Transverse colon (tissue), 4 donors: ENCODE measurements at regions of chr11 and their contacts with region 1.

Region 1: DNA sequence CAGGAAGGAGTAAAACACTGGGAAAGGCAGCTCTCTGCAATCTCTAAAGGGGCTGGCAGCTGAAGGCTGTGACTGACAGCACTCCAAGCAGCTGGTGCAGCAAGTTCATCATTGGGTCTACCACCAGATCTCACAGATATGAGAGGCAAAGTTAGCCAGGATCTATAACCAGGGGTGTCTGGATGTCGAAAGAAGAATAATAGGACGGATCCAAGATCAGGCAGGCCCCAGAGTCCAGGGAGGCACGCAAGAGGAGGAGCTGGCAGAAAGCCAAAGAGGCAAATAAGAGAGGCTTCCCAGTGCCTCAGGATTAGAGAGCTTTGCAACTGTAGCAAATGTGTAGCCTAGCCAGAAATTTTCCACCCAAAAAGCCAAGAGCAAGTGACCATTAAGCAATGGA is 77.1 kb downstream of the RBMXL2 start:
- DNase-seq: no peak
- H3K4me3 ChIP-seq: no peak overlapping the region
- H3K27ac ChIP-seq: no peak overlapping the region
- H3K4me1 ChIP-seq: no peaks in the 10 kb centered on the region
- H3K27me3 ChIP-seq: no peaks in the 10 kb centered on the region
- CTCF ChIP-seq: no peak
- EP300 ChIP-seq: no peak
- POLR2A ChIP-seq: no peak

Region 2: DNA sequence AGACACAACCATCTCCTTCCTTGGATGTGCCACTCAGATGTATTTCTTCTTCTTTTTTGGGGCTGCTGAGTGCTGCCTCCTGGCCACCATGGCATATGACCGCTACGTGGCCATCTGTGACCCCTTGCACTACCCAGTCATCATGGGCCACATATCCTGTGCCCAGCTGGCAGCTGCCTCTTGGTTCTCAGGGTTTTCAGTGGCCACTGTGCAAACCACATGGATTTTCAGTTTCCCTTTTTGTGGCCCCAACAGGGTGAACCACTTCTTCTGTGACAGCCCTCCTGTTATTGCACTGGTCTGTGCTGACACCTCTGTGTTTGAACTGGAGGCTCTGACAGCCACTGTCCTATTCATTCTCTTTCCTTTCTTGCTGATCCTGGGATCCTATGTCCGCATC is 289.0 kb before region 1 on chr11:
- in situ Hi-C with region 1: no loop called
- intact Hi-C with region 1: no loop called
- DNase-seq: peak; percentile 12
- H3K4me3 ChIP-seq: no peak overlapping the region
- H3K27ac ChIP-seq: no peak overlapping the region
- H3K4me1 ChIP-seq: no peaks in the 10 kb centered on the region
- H3K27me3 ChIP-seq: no peaks in the 10 kb centered on the region
- CTCF ChIP-seq: no peak
- EP300 ChIP-seq: no peak
- POLR2A ChIP-seq: no peak

Region 3: DNA sequence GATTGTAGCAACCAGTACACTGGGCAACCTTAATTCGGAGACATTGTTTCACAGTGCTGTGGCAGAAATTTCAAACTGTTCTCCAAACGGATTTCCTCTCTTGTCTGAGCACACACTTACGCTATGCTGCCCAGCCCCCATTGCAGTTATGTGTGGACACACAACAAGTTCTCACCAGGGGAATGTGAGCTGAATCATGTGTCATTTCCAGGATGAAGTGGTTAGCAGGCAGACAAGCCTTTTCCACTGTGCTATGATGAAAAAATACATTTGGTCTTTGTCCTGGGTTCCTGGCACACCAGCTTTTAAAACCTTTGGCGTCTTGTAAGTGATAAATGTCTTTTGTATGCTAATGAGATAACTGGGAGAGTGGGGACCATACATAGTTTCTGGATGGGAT is 38.9 kb after region 1 on chr11:
- in situ Hi-C with region 1: no loop called
- intact Hi-C with region 1: loop called (anchors 1 kb)
- DNase-seq: no peak
- H3K4me3 ChIP-seq: no peak overlapping the region
- H3K27ac ChIP-seq: no peak overlapping the region
- H3K4me1 ChIP-seq: no peaks in the 10 kb centered on the region
- H3K27me3 ChIP-seq: no peaks in the 10 kb centered on the region
- CTCF ChIP-seq: no peak
- EP300 ChIP-seq: no peak
- POLR2A ChIP-seq: no peak

Region 4: GRCh38 chr11:7457211-7457610 is 291.3 kb after region 1 on chr11:
- in situ Hi-C with region 1: no loop called
- intact Hi-C with region 1: no loop called
- DNase-seq: no peak
- H3K4me3 ChIP-seq: no peak overlapping the region
- H3K27ac ChIP-seq: no peak overlapping the region
- H3K4me1 ChIP-seq: no peaks in the 10 kb centered on the region
- H3K27me3 ChIP-seq: no peaks in the 10 kb centered on the region
- CTCF ChIP-seq: no peak
- EP300 ChIP-seq: no peak
- POLR2A ChIP-seq: no peak

Region 5: DNA sequence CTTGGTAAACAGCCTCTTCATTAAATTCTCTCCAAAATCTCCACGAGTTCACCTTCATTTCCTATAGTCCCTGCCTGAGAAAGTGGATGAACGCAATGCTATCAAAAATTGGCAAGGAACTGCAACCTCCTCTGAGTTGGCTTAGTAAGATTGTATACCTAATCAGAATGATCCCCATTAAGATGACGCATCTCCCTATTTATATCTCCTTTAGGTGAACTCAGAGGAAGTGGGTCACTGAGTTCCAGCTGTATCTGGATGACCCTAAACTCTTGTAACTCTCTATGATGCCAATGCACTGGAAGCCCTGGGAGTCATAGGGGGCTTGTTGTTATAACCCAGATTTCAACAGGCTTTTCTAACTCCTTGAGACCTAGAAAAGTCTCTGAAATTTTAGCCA is 716.9 kb after region 1 on chr11:
- in situ Hi-C with region 1: no loop called
- intact Hi-C with region 1: no loop called
- DNase-seq: no peak
- H3K4me3 ChIP-seq: no peak overlapping the region
- H3K27ac ChIP-seq: no peak overlapping the region
- H3K4me1 ChIP-seq: no peaks in the 10 kb centered on the region
- H3K27me3 ChIP-seq: peaks cover 8% of the 10 kb centered on the region
- CTCF ChIP-seq: no peak
- EP300 ChIP-seq: no peak
- POLR2A ChIP-seq: no peak